PC-9 (cell line): ENCODE measurements at regions of chr9 and their contacts with region 1.

Region 1: DNA sequence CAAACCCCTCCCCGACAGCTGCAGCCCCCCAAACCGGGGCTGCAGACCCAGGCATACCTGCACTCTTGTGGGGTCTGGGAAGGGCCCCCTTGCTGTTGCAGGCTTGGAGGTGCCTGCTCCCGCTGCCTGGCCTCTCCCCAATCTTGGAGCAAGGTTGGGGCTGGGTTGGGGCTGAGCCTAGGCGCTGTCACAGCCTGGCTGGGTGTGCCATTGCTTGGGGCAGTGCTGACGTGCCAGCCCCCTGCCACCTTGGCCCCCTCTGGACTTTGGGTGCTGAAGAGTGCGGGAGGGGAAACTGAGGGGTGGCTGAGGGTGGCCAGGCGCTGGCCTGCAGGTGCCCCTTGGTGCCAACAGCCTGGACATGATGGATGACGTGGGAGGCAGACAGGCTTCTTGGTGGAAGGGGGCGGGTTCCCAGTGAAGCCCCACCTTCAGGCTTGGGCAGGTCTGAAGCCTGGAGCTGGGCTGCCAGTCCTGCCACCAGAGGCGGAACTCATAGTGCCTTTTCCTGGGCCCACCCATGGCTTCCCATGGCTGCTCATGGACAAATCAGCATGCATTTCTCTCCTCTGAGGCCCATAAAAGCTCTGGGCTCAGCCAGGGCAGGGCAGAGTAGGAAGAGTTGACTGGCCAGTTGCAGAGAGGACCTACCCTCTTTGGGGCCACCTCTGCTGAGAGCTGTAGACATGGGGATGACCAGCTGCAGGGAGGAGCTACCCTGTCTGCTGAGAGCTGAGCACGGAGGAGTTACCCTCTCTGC is 19.1 kb downstream of the TMEM38B start:
- DNase-seq: no peak
- H3K4me3 ChIP-seq: no peak overlapping the region
- H3K27ac ChIP-seq: no peak overlapping the region
- H3K4me1 ChIP-seq: no peaks in the 10 kb centered on the region
- H3K27me3 ChIP-seq: no peaks in the 10 kb centered on the region
- CTCF ChIP-seq: no peak

Region 2: GRCh38 chr9:105371691-105372090 is 341.7 kb before region 1 on chr9:
- CTCF ChIA-PET with region 1: no interaction called
- POLR2A ChIA-PET with region 1: no interaction called
- intact Hi-C with region 1: no loop called
- DNase-seq: peak in 1 of 2 experiments; percentile 48
- H3K4me3 ChIP-seq: no peak overlapping the region
- H3K27ac ChIP-seq: no peak overlapping the region
- H3K4me1 ChIP-seq: no peaks in the 10 kb centered on the region
- H3K27me3 ChIP-seq: no peaks in the 10 kb centered on the region
- CTCF ChIP-seq: no peak

Region 3: DNA sequence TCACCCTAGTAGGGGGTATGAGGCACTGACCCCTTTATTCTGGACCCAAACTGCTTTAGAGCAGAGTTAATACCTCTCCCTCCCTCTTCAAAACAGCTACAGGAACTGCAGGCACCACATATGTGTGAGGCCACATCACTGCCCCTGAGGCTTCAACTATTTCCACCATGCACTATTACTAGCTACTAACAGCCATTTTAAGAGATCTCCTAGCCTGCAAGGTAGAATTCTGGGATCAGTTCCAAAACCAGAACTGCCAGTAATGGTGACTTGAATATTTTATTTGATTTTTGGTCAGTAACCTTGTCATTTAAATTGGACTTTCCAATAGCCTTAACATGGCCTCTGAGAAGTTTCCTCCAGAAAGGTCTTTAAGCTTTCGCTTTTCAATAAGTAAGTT is 320.9 kb before region 1 on chr9:
- CTCF ChIA-PET with region 1: no interaction called
- POLR2A ChIA-PET with region 1: no interaction called
- intact Hi-C with region 1: no loop called
- DNase-seq: no peak
- H3K4me3 ChIP-seq: no peak overlapping the region
- H3K27ac ChIP-seq: no peak overlapping the region
- H3K4me1 ChIP-seq: no peaks in the 10 kb centered on the region
- H3K27me3 ChIP-seq: no peaks in the 10 kb centered on the region
- CTCF ChIP-seq: no peak

Region 4: GRCh38 chr9:105425841-105426436 is 287.5 kb before region 1 on chr9:
- CTCF ChIA-PET with region 1: no interaction called
- POLR2A ChIA-PET with region 1: no interaction called
- intact Hi-C with region 1: loop called (anchors 2 kb)
- DNase-seq: no peak
- H3K4me3 ChIP-seq: no peak overlapping the region
- H3K27ac ChIP-seq: no peak overlapping the region
- H3K4me1 ChIP-seq: no peaks in the 10 kb centered on the region
- H3K27me3 ChIP-seq: no peaks in the 10 kb centered on the region
- CTCF ChIP-seq: peak; percentile 70

Region 5: DNA sequence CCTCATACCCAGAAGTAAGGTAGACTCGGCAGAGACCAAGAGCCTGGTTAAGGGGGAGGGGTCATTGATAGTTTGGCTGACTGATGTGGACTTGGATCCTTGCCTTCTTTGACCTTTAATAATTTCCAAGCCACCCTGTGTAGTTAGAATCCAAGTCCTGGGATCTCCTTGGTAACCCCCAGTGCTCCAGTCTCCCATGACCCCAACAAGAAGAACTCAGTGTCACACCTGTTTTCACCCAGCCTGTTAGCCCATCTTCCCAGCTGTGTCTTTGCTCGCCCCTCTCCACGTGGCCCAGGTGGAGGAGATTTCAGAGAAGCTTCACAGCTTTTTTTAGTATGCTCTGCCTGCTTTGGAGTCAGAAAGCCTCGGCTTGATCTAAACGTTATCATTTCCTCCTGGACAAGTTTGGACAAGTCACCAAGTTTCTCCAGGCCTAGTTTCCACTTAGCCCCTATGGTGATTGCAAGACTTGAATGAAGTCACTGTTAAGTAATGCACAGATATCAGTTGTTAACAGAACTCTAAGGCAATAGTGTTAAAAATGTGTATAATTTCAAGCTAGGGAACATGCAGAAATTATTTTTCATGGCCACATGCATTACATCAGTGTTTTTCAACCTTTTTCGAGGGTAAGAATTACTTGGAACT is 150.9 kb after region 1 on chr9:
- CTCF ChIA-PET with region 1: no interaction called
- POLR2A ChIA-PET with region 1: no interaction called
- intact Hi-C with region 1: no loop called
- DNase-seq: no peak
- H3K4me3 ChIP-seq: no peak overlapping the region
- H3K27ac ChIP-seq: no peak overlapping the region
- H3K4me1 ChIP-seq: no peaks in the 10 kb centered on the region
- H3K27me3 ChIP-seq: no peaks in the 10 kb centered on the region
- CTCF ChIP-seq: no peak